PC-3 (cell line): ENCODE measurements at regions of chr19 and their contacts with region 1.

Region 1: GRCh38 chr19:44093931-44094765 is at the start of gene ZNF224:
- DNase-seq: peak; percentile 85
- ATAC-seq: peak; percentile 97
- H3K4me3 ChIP-seq: peak within 1 kb of the TSS; percentile 97
- H3K27ac ChIP-seq: no peak within 1 kb of the TSS
- H3K4me1 ChIP-seq: no peaks in the 10 kb centered on the region
- H3K27me3 ChIP-seq: no peaks in the 10 kb centered on the region
- CTCF ChIP-seq: no peak
- total RNA-seq, gene ZNF224: 5.6 and 11.0 TPM in 2 replicates

Region 2: DNA sequence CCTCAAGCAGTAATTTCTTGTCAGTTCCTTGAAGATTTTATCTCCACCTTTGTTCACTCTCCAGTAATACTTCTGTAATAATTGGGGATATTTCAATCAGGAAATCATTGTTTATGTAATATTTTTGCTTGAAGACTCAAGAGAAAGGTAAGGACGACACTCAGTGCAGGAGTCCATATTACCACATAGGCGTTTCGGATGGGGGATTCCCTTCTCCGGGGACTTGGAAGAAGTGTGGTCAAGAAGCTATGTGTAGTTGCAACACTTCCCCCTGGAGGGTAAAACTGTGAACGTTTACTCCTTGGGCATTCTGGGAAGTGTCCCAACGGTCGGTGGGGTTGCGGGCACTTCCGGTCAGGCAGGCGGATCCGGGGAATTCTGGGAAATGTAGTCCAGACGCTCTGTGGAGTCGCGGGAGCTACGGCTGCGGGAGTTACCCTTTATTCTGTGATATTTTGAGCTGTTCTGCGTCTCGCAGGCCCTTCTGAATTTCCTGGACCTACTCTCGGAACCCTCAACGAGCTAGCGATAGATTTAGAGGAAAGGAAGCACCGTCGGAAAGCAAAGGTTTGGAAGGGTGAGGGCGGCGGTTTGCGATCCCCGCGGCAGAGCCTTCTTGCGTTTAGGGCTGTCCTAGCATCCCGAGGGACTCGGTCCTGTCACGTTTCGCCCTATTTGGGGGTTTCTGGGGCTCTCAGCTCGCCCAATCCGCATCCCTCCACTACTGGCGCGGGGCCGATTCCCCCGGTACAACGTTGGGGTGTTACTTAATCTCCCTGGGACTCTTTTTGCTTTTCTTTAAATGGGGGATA is 143.1 kb before region 1 on chr19 and contains the start of gene ZNF221:
- CTCF ChIA-PET with region 1: no interaction called
- POLR2A ChIA-PET with region 1: no interaction called
- intact Hi-C with region 1: loop called (anchors 10 kb)
- DNase-seq: peak; percentile 93
- ATAC-seq: peak; percentile 96
- H3K4me3 ChIP-seq: peak within 1 kb of the TSS; percentile 85
- H3K27ac ChIP-seq: no peak within 1 kb of the TSS
- H3K4me1 ChIP-seq: no peaks in the 10 kb centered on the region
- H3K27me3 ChIP-seq: no peaks in the 10 kb centered on the region
- CTCF ChIP-seq: peak; percentile 53
- total RNA-seq, gene ZNF221: 0.55 and 2.1 TPM in 2 replicates

Region 3: DNA sequence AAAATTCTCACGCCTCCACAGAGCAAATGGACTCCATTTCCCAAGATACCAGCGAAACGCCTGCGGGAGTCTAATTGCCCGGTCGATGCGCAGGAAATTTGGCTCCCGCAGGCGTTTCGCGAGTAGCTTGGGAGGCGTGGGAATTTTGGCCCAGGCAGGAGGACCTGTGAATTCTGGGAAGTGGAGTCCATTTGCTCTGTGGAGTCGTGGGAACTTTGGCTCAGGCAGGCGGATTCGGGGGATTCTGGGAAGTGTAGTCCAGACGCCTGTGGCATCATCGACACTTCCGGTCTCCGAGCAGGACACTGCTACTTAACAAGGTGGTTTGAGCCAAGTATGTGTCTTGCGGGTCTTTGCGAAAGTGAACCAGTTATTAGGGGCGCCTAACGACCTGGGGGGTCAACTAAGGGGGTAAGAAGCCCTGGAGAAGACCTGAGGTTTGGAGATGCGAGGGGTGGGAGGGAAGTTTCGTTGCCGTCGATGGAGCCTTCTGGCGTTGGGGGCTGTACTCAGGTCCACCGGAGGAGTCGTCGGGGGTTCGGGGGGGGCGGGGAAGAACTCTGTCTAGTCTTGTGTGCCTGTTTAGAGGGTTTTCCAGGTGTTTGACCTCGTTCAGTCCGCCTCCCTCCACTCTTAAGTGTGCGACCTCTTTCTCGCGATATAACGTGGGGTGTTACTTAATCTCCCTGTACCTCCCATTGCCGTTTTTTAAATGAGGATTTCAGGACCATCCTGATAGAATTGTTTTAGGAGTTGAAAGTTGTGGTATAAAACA is 110.0 kb before region 1 on chr19 and contains the start of gene ZNF155:
- CTCF ChIA-PET with region 1: no interaction called
- POLR2A ChIA-PET with region 1: no interaction called
- intact Hi-C with region 1: loop called (anchors 1 kb)
- DNase-seq: peak; percentile 92
- ATAC-seq: peak; percentile 99
- H3K4me3 ChIP-seq: peak within 1 kb of the TSS; percentile 81
- H3K27ac ChIP-seq: no peak within 1 kb of the TSS
- H3K4me1 ChIP-seq: no peaks in the 10 kb centered on the region
- H3K27me3 ChIP-seq: no peaks in the 10 kb centered on the region
- CTCF ChIP-seq: no peak
- total RNA-seq, gene ZNF155: 3.1 and 4.4 TPM in 2 replicates

Region 4: DNA sequence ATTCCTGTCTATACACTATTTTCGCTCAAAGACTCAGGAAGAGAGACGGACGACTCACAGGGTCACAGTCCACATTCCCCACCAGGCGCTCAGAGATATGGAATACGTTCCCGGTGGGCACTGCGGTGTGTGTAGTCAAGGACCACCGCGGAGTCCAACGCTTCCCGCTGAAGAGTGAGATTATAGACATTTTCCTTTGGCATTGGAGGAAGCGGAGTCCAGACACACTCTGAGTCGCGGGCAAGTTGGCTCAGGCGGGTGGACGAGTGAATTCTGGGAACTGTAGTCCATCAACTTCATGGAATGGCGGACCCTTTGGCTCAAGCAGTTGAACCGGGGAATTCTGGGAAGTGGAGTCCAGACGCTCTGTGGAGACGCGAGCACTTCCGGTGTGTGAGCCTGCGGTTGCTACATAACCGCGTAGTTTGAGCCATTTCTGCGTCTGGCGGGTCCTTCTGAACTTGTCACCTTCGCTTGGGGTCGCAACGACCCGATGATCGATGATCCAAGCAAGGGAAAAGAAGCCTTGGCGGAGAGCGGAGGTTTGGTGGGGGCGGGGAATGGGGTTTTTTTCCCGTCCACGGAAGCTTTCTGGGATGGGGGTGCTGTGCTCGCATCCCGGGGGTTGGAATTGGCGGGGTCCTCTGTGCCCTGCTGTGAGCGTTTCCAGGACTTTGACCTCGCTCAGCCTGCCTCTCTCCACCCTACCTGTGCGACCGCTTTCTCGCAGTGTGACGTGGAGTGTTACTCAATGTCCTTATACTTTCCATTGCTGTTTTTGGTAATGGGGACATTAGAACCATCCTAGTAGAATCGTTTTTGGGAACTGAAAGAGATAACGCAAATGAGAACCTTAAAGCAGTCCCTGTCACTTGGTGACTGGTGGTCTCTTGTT is 91.3 kb before region 1 on chr19 and contains the start of gene ZNF230:
- CTCF ChIA-PET with region 1: interaction called, 3 read pairs
- POLR2A ChIA-PET with region 1: no interaction called
- intact Hi-C with region 1: loop called (anchors 1 kb)
- DNase-seq: peak; percentile 93
- ATAC-seq: peak; percentile 97
- H3K4me3 ChIP-seq: peak within 1 kb of the TSS; percentile 81
- H3K27ac ChIP-seq: no peak within 1 kb of the TSS
- H3K4me1 ChIP-seq: no peaks in the 10 kb centered on the region
- H3K27me3 ChIP-seq: no peaks in the 10 kb centered on the region
- CTCF ChIP-seq: no peak
- total RNA-seq, gene ZNF230: 0.52 and 1.0 TPM in 2 replicates

Region 5: DNA sequence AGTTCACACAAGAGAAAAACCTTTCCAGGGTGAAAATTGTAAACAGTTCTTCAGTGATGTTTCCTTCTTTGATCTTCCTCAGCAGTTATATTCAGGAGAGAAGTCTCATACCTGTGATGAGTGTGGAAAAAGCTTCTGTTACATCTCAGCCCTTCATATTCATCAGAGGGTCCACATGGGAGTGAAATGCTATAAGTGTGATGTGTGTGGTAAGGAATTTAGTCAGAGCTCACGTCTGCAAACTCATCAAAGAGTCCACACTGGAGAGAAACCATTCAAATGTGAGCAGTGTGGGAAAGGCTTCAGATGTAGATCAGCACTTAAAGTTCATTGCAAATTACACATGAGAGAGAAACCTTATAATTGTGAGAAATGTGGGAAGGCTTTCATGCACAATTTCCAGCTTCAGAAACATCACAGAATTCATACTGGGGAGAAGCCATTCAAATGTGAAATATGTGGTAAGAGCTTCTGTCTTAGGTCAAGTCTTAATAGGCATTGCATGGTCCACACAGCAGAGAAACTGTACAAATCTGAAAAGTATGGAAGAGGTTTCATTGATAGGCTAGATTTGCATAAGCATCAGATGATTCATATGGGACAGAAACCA is 62.0 kb before region 1 on chr19:
- CTCF ChIA-PET with region 1: no interaction called
- POLR2A ChIA-PET with region 1: no interaction called
- intact Hi-C with region 1: no loop called
- DNase-seq: no peak
- ATAC-seq: no peak
- H3K4me3 ChIP-seq: no peak overlapping the region
- H3K27ac ChIP-seq: no peak overlapping the region
- H3K4me1 ChIP-seq: no peaks in the 10 kb centered on the region
- H3K27me3 ChIP-seq: no peaks in the 10 kb centered on the region
- CTCF ChIP-seq: no peak

Region 6: DNA sequence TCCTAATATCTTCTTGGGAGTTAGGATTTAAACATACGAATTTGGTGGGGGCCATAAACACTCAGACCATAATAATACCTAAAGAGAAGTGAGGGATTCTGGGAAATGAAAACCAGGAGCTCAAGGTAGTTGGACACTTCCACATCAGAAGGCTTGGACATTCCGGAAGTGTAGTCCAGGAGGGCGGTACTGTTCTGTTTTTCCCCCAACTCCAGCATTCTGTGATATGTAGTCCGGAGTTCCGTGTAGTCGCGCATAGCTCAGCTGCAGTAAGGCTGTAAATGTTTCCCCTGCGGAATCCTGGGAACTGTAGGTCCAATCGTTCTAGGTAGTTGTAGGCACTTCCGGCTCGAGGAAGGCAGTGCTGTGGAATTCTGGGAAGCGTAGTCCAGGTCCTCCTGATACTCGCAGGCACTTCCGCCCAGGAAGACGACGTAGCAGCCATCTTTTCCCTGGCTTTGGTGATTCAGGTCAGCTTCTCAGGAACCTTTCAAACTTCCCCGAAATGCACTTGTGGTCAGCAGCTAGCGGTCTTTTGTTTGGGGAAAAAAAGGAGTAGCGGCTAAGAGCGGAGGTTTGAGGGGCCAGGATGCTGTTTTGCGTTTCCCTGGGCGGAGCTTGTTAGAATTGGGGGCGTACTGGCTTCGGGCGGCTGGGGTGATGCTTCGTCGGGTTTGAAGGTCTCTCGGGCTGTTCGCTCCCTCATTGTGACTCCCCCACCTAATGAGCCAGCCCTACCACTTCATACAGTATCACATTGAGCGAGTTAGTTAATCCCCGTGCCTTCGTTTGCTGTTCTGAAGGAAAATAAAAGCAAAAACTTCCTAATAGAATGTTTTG is 70.7 kb after region 1 on chr19 and contains the start of gene ZNF226:
- CTCF ChIA-PET with region 1: no interaction called
- POLR2A ChIA-PET with region 1: no interaction called
- intact Hi-C with region 1: loop called (anchors 1 kb)
- DNase-seq: peak; percentile 92
- ATAC-seq: peak; percentile 99
- H3K4me3 ChIP-seq: peak within 1 kb of the TSS; percentile 75
- H3K27ac ChIP-seq: peak within 1 kb of the TSS; percentile 13
- H3K4me1 ChIP-seq: peaks cover 5% of the 10 kb centered on the region; the same call in 1 of the 2 replicates
- H3K27me3 ChIP-seq: no peaks in the 10 kb centered on the region
- CTCF ChIP-seq: no peak
- total RNA-seq, gene ZNF226: 4.8 and 6.0 TPM in 2 replicates